ENCODE measurements at regions of chr3 and their contacts with region 1.

Region 1: DNA sequence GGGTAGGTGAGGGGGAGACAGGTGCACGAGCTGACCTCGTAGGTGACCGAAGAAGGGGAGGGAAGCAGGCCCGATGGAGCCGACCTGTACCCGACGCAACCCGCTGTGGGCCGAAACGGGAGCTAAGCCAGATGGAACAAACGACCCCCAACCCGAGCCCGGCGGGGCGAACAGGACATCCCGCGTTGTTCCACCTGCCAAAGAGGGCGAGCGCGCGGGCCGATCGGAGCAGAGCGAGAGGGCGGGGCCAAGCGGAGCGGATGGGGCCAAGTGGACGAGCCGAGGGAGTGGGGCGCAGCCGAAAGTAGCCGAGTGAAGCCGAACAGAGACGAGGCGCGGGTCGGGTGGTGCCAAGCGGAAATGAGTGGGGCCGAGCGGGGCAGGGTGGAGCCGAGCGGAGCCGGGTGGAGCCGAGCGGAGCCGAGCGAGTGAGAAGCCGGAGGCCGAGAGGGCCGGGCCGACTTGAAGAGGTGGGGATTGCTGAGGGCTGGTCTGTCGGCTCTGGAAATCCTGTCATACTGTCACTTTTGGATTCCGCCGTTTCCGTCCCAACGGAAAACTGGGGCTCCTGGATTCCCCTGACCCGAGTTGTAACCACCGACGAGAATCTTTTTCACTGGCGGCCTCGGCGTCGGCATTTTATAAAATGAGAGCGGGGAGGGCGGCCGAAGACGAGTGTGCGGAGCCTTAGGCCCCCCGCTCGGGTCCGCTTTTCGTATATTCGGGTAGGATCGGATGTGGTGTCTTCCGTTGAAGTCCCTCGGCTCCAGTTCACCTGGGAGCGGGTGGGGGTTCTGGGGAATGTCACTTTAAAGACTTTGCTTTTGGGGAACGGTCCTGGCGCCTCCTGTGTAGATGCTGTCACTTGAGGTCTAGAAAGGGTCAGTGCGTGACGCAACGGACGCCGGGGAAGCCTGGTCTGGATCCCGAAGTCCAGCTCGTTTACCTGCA is 15.6 kb upstream of the WNT7A start:
- DNase-seq: peak; percentile 91 to 96 (median 94)
- ATAC-seq: peak; percentile 98
- H3K4me3 ChIP-seq: peak overlapping the region; percentile 51 to 59
- H3K27ac ChIP-seq: peak overlapping the region in 1 of 2 donors; percentile 71
- H3K4me1 ChIP-seq: peaks cover 6 to 14% of the 10 kb centered on the region in 2 donors
- H3K27me3 ChIP-seq: peaks cover 0 to 22% of the 10 kb centered on the region in 2 donors
- CTCF ChIP-seq: no peak

Region 2: DNA sequence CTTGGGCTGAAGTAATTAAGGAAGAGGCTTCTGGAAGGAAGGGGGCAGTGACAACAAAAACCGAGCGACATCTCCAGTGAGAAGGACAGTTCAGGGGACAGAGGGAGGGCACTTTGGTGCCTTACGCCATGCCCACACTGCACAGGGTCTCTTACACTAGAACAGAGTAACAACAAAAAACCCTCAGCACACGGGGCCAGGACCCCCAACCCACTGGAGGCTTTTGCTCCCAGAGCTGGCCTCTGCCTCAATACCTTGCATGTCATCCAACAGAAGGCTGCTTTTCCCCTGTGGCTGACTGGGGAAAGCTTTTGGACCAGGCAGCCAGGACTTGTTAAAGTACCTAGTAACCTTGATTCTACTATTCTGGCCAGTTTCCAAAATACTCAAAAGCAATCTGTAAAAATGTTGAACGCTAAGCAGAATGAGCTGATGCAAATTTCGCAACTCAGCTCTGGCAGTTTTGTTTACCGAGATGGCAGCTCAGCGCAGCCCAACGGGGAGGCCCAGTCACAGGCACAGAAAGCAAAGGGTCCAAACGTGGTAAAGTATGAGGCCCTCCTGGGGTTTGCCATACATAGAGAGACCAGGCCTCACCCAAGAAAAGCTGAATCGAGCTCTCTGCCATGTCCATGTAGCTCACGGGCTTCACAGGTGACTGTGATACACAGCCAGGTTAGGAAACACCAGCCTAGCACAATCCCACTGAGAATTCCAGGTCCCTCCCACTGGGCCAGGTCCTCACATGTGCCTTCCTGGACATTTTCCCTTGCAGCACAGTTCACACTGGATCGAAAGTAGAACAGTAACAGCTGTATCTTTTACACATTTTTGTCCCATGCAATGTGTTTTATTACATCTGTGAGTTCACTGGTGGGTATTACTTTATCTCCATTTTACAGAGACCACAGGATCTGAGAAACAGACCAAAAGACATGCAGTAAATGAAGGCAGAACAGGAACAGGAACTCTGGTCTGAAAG is 223.3 kb after region 1 on chr3:
- intact Hi-C with region 1: loop called in 1 of 2 experiments (anchors 5 kb)
- DNase-seq: peak in 2 of 4 donors; percentile 36 to 72
- ATAC-seq: peak; percentile 66
- H3K4me3 ChIP-seq: no peak overlapping the region
- H3K27ac ChIP-seq: peak overlapping the region in 1 of 2 donors; percentile 30
- H3K4me1 ChIP-seq: peaks cover 7 to 17% of the 10 kb centered on the region in 2 donors
- H3K27me3 ChIP-seq: no peaks in the 10 kb centered on the region
- CTCF ChIP-seq: no peak